H1 (cell line): ENCODE measurements at regions of chr2 and their contacts with region 1.

Region 1: GRCh38 chr2:73212448-73213176 is 1.4 kb upstream of the SMYD5 start:
- DNase-seq: peak in 1 of 2 experiments; percentile 90
- H3K4me3 ChIP-seq: no peak overlapping the region
- H3K27ac ChIP-seq: no peak overlapping the region
- H3K4me1 ChIP-seq: peaks cover 2 to 3% (median 3%) of the 10 kb centered on the region in 4 experiments; a peak in 4 of 7 replicates
- H3K27me3 ChIP-seq: peaks cover 0 to 4% (median 2%) of the 10 kb centered on the region in 4 experiments; a peak in 1 of 7 replicates
- CTCF ChIP-seq: peak; percentile 85 to 98 (median 97)
- EP300 ChIP-seq: no peak
- POLR2A ChIP-seq: no peak
- RAD21 ChIP-seq: peak; percentile 79 to 87

Region 2: DNA sequence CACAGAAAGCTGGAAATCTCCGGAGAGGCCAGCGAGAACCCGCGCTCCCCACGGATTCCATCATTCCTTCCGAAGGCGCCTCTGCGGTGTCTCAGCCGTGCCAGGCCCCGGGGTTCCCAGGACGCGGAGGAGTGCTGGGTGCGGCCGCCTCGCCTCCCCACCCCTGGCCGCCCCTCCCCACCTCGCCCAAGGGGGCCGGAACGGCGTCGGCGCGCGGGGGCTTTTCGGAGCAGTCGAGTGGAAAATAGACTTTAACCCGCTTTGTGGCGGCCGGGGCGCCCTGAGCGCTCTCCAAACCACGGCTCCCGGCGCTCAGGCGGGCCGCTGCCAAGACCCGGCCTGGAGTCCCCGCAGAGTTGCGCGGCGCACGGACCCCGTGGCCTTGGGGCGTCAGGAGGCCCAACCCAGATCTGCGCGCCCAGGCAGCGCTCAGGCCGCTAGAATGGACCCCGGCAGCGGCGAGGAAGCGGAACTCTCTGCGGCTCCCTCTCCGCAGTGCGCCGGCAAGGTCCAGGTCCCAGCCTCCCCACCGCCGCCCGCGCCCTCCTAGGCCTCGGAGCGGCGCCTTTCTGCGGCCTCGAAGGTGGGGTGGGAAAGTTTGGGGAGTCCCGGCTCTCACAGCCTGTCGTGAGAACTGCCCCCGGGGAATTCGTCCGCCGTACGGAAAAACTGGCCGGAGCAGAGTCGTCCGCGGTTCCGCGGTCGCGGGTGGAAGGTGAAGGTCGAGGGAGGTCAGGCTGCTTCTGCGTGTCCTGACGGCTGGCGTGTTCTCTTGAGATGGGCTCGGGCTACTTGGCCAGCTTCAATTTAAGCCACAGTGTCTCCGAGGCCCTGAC is 296.5 kb before region 1 on chr2:
- CTCF ChIA-PET with region 1: no interaction called
- POLR2A ChIA-PET with region 1: no interaction called
- DNase-seq: peak in 1 of 2 experiments; percentile 86
- H3K4me3 ChIP-seq: peak overlapping the region; percentile 55 to 70 (median 66)
- H3K27ac ChIP-seq: no peak overlapping the region
- H3K4me1 ChIP-seq: peaks cover 20 to 52% (median 28%) of the 10 kb centered on the region in 4 experiments
- H3K27me3 ChIP-seq: peaks cover 80 to 96% (median 89%) of the 10 kb centered on the region in 4 experiments
- CTCF ChIP-seq: no peak
- EP300 ChIP-seq: no peak
- POLR2A ChIP-seq: no peak
- RAD21 ChIP-seq: no peak

Region 3: GRCh38 chr2:73202156-73203054 is 10.2 kb before region 1 on chr2 and contains the start of gene NOTO:
- CTCF ChIA-PET with region 1: interaction called, 18 read pairs
- POLR2A ChIA-PET with region 1: interaction called, 17 read pairs
- DNase-seq: peak in 1 of 2 experiments; percentile 81
- H3K4me3 ChIP-seq: peak within 1 kb of the TSS; percentile 26 to 57 (median 42)
- H3K27ac ChIP-seq: no peak within 1 kb of the TSS
- H3K4me1 ChIP-seq: peaks cover 0 to 2% (median 0%) of the 10 kb centered on the region in 4 experiments; a peak in 2 of 7 replicates
- H3K27me3 ChIP-seq: peaks cover 14 to 34% (median 25%) of the 10 kb centered on the region in 4 experiments
- CTCF ChIP-seq: no peak
- EP300 ChIP-seq: no peak
- POLR2A ChIP-seq: no peak
- RAD21 ChIP-seq: no peak
- total RNA-seq, gene NOTO: 0.44 and 0.54 TPM in 2 replicates

Region 4: DNA sequence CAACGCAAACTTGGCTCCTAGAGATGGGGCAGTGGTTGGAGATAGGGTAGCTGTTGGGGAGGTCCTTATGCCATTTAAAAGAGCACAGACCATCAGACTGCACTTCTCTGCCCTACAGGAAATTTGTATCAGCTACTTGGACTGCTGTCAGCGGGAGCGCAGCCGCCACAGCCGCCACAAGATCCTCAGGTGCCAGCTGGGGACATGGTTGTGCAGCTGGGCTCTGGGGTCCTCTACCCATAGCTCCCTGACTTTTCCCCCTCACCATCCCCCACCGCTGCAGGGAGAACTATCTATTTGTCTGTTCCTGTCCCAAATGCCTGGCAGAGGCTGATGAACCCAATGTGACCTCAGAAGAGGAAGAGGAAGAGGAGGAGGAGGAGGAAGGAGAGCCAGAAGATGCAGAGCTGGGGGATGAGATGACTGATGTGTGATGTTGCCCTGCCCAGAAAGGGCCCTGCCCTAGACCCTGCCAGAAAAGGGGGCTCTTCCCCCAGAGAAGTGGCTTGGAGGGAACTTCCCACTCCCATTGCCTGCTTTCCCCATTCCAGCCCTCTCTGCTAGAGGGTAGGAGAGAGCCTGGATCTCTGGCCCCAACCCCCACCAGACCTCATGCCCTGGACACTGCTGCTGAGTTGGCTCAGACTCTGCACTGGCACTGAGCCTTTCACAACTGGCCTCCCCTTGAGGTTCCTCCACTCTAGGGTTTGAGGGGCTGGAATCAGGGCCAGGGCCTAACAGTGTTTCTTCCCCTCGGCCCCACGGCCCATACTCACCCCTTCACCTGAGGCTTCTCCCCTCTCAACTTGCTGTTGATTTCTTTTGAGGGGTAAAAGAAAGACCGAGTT is 13.1 kb after region 1 on chr2:
- CTCF ChIA-PET with region 1: interaction called, 24 read pairs
- POLR2A ChIA-PET with region 1: interaction called, 113 read pairs
- DNase-seq: no peak
- H3K4me3 ChIP-seq: no peak overlapping the region
- H3K27ac ChIP-seq: no peak overlapping the region
- H3K4me1 ChIP-seq: no peaks in the 10 kb centered on the region
- H3K27me3 ChIP-seq: no peaks in the 10 kb centered on the region
- CTCF ChIP-seq: no peak
- EP300 ChIP-seq: no peak
- POLR2A ChIP-seq: no peak
- RAD21 ChIP-seq: no peak

Region 5: GRCh38 chr2:73233154-73233931 is 20.7 kb after region 1 on chr2 and contains the start of gene PRADC1:
- CTCF ChIA-PET with region 1: interaction called, 24 read pairs
- POLR2A ChIA-PET with region 1: interaction called, 113 read pairs
- DNase-seq: peak; percentile 94 to 98
- H3K4me3 ChIP-seq: peak within 1 kb of the TSS; percentile 82 to 93 (median 88)
- H3K27ac ChIP-seq: peak within 1 kb of the TSS; percentile 30; the same call in 1 of the 2 replicates
- H3K4me1 ChIP-seq: peaks cover 10 to 16% (median 13%) of the 10 kb centered on the region in 4 experiments; a peak in 6 of 7 replicates
- H3K27me3 ChIP-seq: no peaks in the 10 kb centered on the region; a peak in 2 of 7 replicates
- CTCF ChIP-seq: no peak
- EP300 ChIP-seq: no peak
- POLR2A ChIP-seq: no peak
- RAD21 ChIP-seq: no peak
- total RNA-seq, gene PRADC1: 7.5 and 8.9 TPM in 2 replicates

Region 6: DNA sequence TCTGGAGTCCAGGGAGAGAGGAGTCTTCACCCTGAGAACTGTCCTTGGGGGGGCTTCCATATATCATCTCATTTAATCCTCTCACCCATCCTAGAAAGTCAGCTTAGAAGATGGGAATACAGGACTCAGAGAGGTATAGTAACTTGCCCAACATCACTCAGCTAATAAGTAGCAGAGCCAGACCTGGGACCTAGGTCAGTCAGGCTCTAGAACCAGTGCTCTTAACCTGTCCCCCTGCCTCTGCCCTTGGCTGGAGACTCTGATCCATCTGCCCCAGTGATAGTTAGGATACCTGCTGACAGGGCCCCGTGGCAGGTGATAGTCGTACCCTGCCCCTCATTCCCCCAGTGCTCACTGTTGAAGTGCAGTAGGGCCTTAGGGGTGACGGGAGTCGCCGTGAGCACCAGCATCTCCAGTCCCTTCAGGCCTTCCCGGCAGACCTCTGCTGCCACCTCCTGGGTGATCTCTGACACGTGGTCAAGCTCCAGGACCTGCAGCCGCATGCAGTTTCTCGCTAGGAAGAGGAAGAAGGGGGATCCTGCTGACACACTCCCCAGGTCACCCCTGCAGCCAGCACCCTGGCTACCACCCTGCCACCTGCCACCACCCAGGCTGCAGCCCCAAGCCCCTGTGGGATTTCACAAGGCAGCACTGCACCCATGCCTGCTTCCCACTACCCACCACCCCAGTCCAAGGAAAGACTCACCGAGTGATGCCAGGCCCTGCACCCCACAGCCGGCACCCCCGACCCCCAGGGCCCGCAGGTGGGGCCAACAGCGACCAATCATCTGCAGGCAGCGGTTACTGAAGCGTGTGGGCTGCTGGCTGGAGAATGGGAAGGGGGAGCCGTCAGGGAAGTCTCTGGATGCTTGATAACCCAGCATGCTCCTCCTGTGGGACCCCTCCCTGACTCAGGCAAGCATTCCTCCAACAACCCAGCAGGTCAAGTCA is 47.7 kb after region 1 on chr2:
- CTCF ChIA-PET with region 1: interaction called, 11 read pairs
- POLR2A ChIA-PET with region 1: interaction called, 3 read pairs
- DNase-seq: peak in 1 of 2 experiments; percentile 80
- H3K4me3 ChIP-seq: no peak overlapping the region
- H3K27ac ChIP-seq: no peak overlapping the region
- H3K4me1 ChIP-seq: peaks cover 0 to 6% (median 3%) of the 10 kb centered on the region in 4 experiments; a peak in 3 of 7 replicates
- H3K27me3 ChIP-seq: no peaks in the 10 kb centered on the region
- CTCF ChIP-seq: peak in 2 of 3 experiments; percentile 67 to 77; a peak in 3 of 4 replicates
- EP300 ChIP-seq: no peak
- POLR2A ChIP-seq: peak in 1 of 2 experiments; percentile 28; a peak in 1 of 3 replicates
- RAD21 ChIP-seq: peak; percentile 71 to 81